ENCODE measurements at regions of chr13 and their contacts with region 1.

Region 1: DNA sequence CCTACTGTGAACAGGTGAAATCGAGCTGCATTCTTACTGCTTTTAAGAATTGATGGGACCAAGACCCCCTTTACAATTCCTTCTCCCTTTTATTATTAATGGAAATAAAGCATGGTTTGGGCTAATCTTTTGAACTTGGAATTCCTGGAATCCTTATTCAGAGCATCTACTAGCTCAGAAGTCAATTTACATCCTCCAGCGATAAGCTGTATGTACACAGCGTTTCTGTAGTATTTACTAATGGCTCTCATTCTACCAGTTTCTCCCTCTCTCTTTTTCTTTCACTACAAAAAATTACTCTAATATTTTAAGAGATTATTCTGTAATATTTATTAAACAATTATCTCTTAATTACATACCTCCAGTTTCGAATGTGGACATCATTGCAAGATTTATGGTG is 31.5 kb downstream of the FREM2 start:
- DNase-seq: no peak
- ATAC-seq: no peak
- H3K4me3 ChIP-seq: no peak overlapping the region
- H3K27ac ChIP-seq: no peak overlapping the region
- H3K4me1 ChIP-seq: no peaks in the 10 kb centered on the region
- H3K27me3 ChIP-seq: no peaks in the 10 kb centered on the region
- CTCF ChIP-seq: no peak

Region 2: GRCh38 chr13:38662362-38662761 is 56.0 kb before region 1 on chr13:
- CTCF ChIA-PET with region 1: no interaction called
- POLR2A ChIA-PET with region 1: no interaction called
- in situ Hi-C with region 1: no loop called
- intact Hi-C with region 1: loop called (anchors 5 kb)
- DNase-seq: no peak
- ATAC-seq: no peak
- H3K4me3 ChIP-seq: no peak overlapping the region
- H3K27ac ChIP-seq: no peak overlapping the region
- H3K4me1 ChIP-seq: no peaks in the 10 kb centered on the region
- H3K27me3 ChIP-seq: no peaks in the 10 kb centered on the region
- CTCF ChIP-seq: no peak

Region 3: GRCh38 chr13:38850868-38851626 is 132.7 kb after region 1 on chr13:
- CTCF ChIA-PET with region 1: no interaction called
- POLR2A ChIA-PET with region 1: no interaction called
- in situ Hi-C with region 1: no loop called
- intact Hi-C with region 1: no loop called
- DNase-seq: no peak
- ATAC-seq: no peak
- H3K4me3 ChIP-seq: no peak overlapping the region
- H3K27ac ChIP-seq: no peak overlapping the region
- H3K4me1 ChIP-seq: no peaks in the 10 kb centered on the region
- H3K27me3 ChIP-seq: no peaks in the 10 kb centered on the region
- CTCF ChIP-seq: no peak

Measured in Panc1 (cell line).